Ovary (tissue), 10 donors: ENCODE measurements at regions of chr2 and their contacts with region 1.

Region 1: DNA sequence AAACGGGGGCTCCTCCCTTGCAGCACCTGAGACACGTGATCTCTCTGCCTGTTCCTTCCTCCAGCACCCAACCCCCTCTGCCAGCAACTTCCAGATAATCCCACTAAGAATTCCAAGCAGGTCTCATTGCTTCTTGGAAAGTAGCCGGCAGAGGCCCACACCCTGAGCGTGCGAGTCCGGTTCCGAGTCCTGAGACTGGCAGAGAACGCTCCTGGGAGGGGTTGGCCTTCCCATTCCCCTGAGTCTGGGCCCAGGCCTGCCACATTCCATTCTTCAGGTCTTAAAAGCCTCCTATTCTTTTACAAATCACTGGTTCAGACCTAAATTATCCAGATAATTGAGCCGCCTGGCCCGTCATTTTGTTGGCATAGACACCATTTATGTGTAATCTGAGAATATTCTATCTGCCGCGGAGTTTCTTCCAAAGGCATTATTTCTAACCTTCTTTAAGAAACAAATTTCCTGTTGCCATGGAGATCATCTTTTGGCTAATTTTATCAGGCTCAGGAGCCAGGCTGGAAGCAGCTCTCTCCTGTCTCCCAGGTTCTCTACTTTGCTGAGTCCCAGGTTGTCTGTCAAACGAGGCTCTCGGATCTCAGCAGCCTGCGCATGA is 165.4 kb downstream of the MYCN start:
- DNase-seq: no peak
- H3K4me3 ChIP-seq: no peak overlapping the region
- H3K27ac ChIP-seq: no peak overlapping the region
- H3K4me1 ChIP-seq: no peaks in the 10 kb centered on the region
- H3K27me3 ChIP-seq: no peaks in the 10 kb centered on the region
- CTCF ChIP-seq: no peak
- EP300 ChIP-seq: no peak
- POLR2A ChIP-seq: no peak

Region 2: GRCh38 chr2:15074751-15075700 is 1030.7 kb before region 1 on chr2:
- intact Hi-C with region 1: no loop called
- DNase-seq: no peak
- H3K4me3 ChIP-seq: no peak overlapping the region
- H3K27ac ChIP-seq: no peak overlapping the region
- H3K4me1 ChIP-seq: no peaks in the 10 kb centered on the region
- H3K27me3 ChIP-seq: no peaks in the 10 kb centered on the region
- CTCF ChIP-seq: no peak
- EP300 ChIP-seq: no peak
- POLR2A ChIP-seq: no peak

Region 3: GRCh38 chr2:15993232-15993610 is 112.6 kb before region 1 on chr2:
- intact Hi-C with region 1: loop called in 1 of 4 experiments (anchors 10 kb)
- DNase-seq: no peak
- H3K4me3 ChIP-seq: no peak overlapping the region
- H3K27ac ChIP-seq: no peak overlapping the region
- H3K4me1 ChIP-seq: no peaks in the 10 kb centered on the region
- H3K27me3 ChIP-seq: no peaks in the 10 kb centered on the region
- CTCF ChIP-seq: no peak
- EP300 ChIP-seq: no peak
- POLR2A ChIP-seq: no peak

Region 4: GRCh38 chr2:16034151-16034973 is 71.4 kb before region 1 on chr2:
- intact Hi-C with region 1: no loop called
- DNase-seq: no peak
- H3K4me3 ChIP-seq: no peak overlapping the region
- H3K27ac ChIP-seq: no peak overlapping the region
- H3K4me1 ChIP-seq: no peaks in the 10 kb centered on the region
- H3K27me3 ChIP-seq: no peaks in the 10 kb centered on the region
- CTCF ChIP-seq: no peak
- EP300 ChIP-seq: no peak
- POLR2A ChIP-seq: no peak